ENCODE measurements at regions of chr12 and their contacts with region 1.

Region 1: DNA sequence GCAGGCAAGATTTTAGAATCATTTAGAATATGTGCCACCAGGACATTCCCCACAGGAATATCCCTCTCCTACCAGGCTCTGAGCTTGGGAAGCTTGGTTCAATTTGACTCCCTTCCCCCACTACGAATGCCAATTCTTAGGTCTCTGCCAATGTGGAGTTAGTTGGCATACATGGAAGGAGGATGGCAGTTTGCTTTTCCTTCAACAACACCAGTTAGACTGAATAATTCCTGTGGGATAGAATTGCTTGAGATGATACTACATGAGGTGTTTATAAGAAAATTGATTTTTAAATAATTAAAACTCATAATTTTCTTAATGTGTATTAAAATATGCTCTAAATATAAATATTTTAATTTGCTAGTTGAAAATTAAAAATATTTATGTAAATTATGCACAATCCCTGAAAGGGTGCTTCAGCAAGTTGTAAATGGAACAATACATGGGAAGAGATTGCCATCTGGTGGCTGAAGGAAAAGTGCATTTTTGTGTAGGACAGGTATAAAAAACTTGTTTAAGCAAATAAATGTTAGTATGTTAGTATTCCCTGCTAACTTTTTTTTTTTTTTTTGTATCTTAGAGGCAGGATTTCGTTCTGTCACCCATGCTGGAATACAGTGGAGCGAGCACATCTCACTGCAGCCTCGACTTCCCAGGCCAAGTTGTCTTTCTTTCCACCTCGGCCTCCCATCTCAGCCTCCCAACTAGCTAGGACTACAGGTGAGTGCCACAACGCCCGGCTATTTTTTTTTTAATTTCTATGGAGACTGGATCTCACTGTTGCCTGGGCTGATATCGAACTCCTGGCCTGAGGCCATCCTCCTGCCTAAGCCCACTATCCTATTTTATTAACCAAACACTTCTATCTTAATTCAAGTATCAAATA is 25.8 kb upstream of the STRAP start:
- DNase-seq: no peak
- H3K4me3 ChIP-seq: no peak overlapping the region
- H3K27ac ChIP-seq: no peak overlapping the region
- H3K4me1 ChIP-seq: no peaks in the 10 kb centered on the region
- H3K27me3 ChIP-seq: no peaks in the 10 kb centered on the region
- CTCF ChIP-seq: peak; percentile 83 to 92 (median 84)
- POLR2A ChIP-seq: no peak

Region 2: GRCh38 chr12:15590180-15590826 is 266.0 kb before region 1 on chr12:
- intact Hi-C with region 1: loop called (anchors 5 kb)
- DNase-seq: peak in 1 of 2 donors; percentile 39
- H3K4me3 ChIP-seq: peak overlapping the region; percentile 8 to 64 (median 42)
- H3K27ac ChIP-seq: peak overlapping the region; percentile 5 to 38
- H3K4me1 ChIP-seq: no peaks in the 10 kb centered on the region
- H3K27me3 ChIP-seq: no peaks in the 10 kb centered on the region
- CTCF ChIP-seq: peak; percentile 82 to 95 (median 90)
- POLR2A ChIP-seq: no peak

Region 3: DNA sequence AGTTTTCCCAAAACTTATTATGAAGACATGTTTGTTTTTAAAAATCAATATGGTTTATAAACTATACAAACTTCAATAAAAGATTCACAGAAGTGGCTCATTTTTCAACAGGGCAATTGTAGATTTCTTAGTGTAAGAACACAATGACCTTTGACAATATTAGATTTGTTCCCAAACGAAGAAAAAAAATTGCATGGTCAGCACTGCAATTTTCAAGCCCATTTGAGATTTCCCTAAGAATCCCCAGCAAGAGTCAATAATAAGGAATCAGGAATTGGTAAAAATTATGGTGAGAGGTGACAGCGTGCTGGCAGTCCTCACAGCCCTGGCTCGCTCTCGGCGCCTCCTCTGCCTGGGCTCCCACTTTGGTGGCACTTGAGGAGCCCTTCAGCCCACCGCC is 200.6 kb after region 1 on chr12:
- intact Hi-C with region 1: no loop called
- DNase-seq: no peak
- H3K4me3 ChIP-seq: no peak overlapping the region
- H3K27ac ChIP-seq: no peak overlapping the region
- H3K4me1 ChIP-seq: no peaks in the 10 kb centered on the region
- H3K27me3 ChIP-seq: no peaks in the 10 kb centered on the region
- CTCF ChIP-seq: no peak
- POLR2A ChIP-seq: no peak

Region 4: GRCh38 chr12:16499611-16500010 is 643.3 kb after region 1 on chr12:
- intact Hi-C with region 1: no loop called
- DNase-seq: no peak
- H3K4me3 ChIP-seq: no peak overlapping the region
- H3K27ac ChIP-seq: no peak overlapping the region
- H3K4me1 ChIP-seq: no peaks in the 10 kb centered on the region
- H3K27me3 ChIP-seq: no peaks in the 10 kb centered on the region
- CTCF ChIP-seq: no peak
- POLR2A ChIP-seq: no peak

Measured in breast epithelium (tissue), 4 donors.